IMR-90 (cell line): ENCODE measurements at regions of chr3 and their contacts with region 1.

Region 1: DNA sequence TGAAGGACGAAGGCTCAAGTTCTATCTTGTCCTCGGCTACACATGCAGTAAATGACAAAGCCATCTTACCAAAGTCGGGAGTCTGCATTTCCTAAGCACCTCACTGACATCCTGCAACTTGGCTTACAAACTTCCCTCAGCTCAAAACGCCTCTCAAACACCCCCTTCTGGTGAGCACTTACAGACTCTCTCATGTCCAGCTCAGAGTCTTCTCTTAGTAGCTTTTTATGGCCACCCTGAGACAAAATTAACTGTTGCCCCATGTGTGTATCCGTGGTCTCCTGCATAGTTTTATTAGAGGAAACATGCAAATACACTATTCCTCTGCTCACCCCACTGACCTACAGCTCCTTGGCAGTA is 819.7 kb downstream of the FHIT start:
- DNase-seq: peak; percentile 48
- ATAC-seq: peak; percentile 85
- H3K4me3 ChIP-seq: no peak overlapping the region
- H3K27ac ChIP-seq: no peak overlapping the region
- H3K4me1 ChIP-seq: no peaks in the 10 kb centered on the region
- H3K27me3 ChIP-seq: no peaks in the 10 kb centered on the region
- CTCF ChIP-seq: peak; percentile 28
- POLR2A ChIP-seq: no peak
- RAD21 ChIP-seq: peak; percentile 39

Region 2: DNA sequence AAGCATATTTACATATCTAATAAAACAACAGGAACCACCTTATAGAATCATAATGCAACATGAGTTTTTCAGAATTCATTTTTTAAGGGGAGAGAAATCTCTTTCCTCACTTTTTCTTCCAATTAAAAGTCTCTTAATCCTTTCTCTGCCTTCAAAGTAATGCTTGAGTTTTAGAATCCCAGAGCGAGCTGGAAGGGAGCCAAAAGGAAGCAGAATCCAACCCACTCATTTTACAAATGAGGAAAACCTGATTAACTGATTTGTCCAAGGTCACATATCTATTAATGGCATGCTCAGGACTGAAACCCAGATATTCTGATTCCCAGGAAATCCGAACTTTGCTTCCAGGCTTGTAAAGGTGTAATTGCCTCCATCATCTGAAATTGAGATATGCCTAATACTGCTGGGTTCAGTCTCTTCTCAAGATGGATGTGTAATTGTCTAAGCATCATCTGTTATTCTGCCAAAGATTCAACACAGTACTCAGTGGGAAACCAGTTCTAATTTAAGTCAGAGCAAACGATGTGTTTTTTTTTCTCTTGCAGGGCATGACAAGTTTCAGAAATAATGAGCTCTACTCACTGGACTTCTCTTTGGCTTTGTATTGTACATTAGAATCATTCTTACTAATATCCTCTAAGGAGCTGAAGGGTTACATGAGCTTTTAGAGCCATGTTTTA is 900.4 kb before region 1 on chr3:
- CTCF ChIA-PET with region 1: no interaction called
- POLR2A ChIA-PET with region 1: no interaction called
- dilution Hi-C with region 1: no loop called
- in situ Hi-C with region 1: no loop called
- intact Hi-C with region 1: no loop called
- DNase-seq: no peak
- ATAC-seq: no peak
- H3K4me3 ChIP-seq: no peak overlapping the region
- H3K27ac ChIP-seq: no peak overlapping the region
- H3K4me1 ChIP-seq: peaks cover 4% of the 10 kb centered on the region; the same call in 1 of the 2 replicates
- H3K27me3 ChIP-seq: no peaks in the 10 kb centered on the region
- CTCF ChIP-seq: no peak
- POLR2A ChIP-seq: no peak
- RAD21 ChIP-seq: no peak

Region 3: DNA sequence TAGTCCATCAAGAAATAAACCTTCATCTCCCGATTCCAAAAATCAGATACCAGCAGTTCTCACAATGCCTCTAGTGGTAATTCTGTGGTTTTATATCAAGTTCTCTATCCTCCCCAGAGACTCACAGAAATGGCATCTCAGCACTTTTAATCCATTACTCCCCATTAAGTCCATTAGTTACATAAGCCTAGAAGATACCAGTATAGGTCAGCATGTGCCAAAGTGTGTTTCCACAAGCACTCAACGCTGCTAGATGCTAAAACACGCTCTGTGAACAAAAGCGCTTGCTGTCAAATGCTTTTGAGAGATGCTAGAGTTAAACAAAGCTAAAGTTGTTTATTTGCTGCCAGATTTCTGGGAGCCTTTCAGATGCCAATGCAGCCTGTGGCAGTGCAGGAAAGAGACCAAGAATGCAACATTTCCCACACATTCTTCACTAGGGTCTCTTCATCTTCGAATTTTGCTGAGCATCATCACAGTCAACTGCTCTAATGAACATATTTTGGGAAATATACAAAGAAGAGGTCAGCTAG is 463.0 kb before region 1 on chr3:
- CTCF ChIA-PET with region 1: no interaction called
- POLR2A ChIA-PET with region 1: no interaction called
- dilution Hi-C with region 1: no loop called
- in situ Hi-C with region 1: no loop called
- intact Hi-C with region 1: no loop called
- DNase-seq: no peak
- ATAC-seq: no peak
- H3K4me3 ChIP-seq: no peak overlapping the region
- H3K27ac ChIP-seq: no peak overlapping the region
- H3K4me1 ChIP-seq: no peaks in the 10 kb centered on the region
- H3K27me3 ChIP-seq: no peaks in the 10 kb centered on the region
- CTCF ChIP-seq: no peak
- POLR2A ChIP-seq: no peak
- RAD21 ChIP-seq: no peak

Region 4: GRCh38 chr3:60250206-60250605 is 181.4 kb before region 1 on chr3:
- CTCF ChIA-PET with region 1: no interaction called
- POLR2A ChIA-PET with region 1: no interaction called
- dilution Hi-C with region 1: no loop called
- in situ Hi-C with region 1: no loop called
- intact Hi-C with region 1: loop called (anchors 2 kb)
- DNase-seq: peak; percentile 3
- ATAC-seq: peak; percentile 11; the same call in 1 of the 2 replicates
- H3K4me3 ChIP-seq: no peak overlapping the region
- H3K27ac ChIP-seq: no peak overlapping the region
- H3K4me1 ChIP-seq: no peaks in the 10 kb centered on the region
- H3K27me3 ChIP-seq: no peaks in the 10 kb centered on the region
- CTCF ChIP-seq: no peak
- POLR2A ChIP-seq: no peak
- RAD21 ChIP-seq: no peak